Activated naive CD4-positive, alpha-beta T cell treated with anti-CD3 and anti-CD28 coated beads for 36 hours (primary cell): ENCODE measurements at regions of chr20 and their contacts with region 1.

Region 1: DNA sequence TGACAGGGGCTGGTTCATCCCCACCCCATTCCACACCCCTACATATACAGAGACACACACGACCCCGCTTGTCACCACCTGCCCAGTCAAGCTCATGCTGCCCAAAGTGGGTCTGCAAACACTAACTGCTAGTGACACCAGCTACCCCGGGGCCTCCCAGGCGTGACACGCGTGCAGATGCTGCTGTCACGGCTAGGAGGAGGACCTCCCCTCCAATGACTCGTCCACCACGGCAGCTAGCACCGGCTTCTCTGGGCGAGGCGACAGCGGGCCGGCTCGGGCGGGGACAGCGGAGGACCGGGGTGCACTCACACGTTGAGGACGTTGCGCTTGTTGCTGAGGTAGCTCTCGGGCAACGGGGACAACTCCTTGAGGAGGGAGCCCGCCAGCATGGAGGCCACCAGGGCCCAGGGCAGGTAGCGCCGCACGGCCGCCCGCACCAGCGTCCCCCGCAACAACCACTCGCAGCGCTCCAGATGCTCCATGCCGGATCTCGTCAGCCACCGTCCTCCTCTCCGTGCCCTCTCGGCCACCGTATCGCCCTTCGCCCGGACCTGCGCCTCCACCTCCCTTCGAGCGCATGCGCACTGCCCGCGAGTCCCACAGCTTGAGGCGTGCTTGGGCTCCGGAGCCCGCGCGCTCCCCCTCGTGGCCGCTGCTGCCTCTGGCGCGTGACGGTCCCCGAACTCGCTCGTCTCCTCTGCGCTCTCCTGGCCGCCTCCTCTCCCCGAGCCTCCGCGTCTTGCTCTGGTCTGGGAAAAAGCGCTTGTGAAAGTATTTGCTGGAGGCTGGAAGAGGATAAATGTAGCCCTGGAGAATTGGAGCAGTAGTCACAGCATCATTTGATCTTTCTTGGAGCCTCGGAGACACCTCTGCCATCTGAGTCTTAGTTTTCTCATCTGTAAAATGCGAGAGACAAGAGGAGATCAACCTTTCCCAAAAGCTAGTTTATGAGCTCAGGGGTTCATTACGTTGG is at the start of gene FITM2:
- DNase-seq: peak; percentile 97
- H3K4me3 Mint-ChIP-seq: peak within 1 kb of the TSS; percentile 90
- H3K27ac Mint-ChIP-seq: peak within 1 kb of the TSS; percentile 76
- H3K4me1 Mint-ChIP-seq: peaks cover 18% of the 10 kb centered on the region
- H3K27me3 Mint-ChIP-seq: no peaks in the 10 kb centered on the region
- total RNA-seq, gene FITM2: 1.7 to 2.1 TPM

Region 2: GRCh38 chr20:44187051-44187762 is 123.7 kb before region 1 on chr20 and contains the start of gene JPH2:
- CTCF ChIA-PET with region 1: interaction called, 12 read pairs
- intact Hi-C with region 1: no loop called
- DNase-seq: no peak
- H3K4me3 Mint-ChIP-seq: peak within 1 kb of the TSS; percentile 7
- H3K27ac Mint-ChIP-seq: no peak within 1 kb of the TSS
- H3K4me1 Mint-ChIP-seq: peaks cover 8% of the 10 kb centered on the region
- H3K27me3 Mint-ChIP-seq: peaks cover 41% of the 10 kb centered on the region
- total RNA-seq, gene JPH2: not detected

Region 3: GRCh38 chr20:44326391-44327159 is 15.6 kb after region 1 on chr20:
- CTCF ChIA-PET with region 1: interaction called, 20 read pairs
- intact Hi-C with region 1: no loop called
- DNase-seq: peak; percentile 23
- H3K4me3 Mint-ChIP-seq: peak overlapping the region; percentile 18
- H3K27ac Mint-ChIP-seq: no peak overlapping the region
- H3K4me1 Mint-ChIP-seq: no peaks in the 10 kb centered on the region
- H3K27me3 Mint-ChIP-seq: no peaks in the 10 kb centered on the region

Region 4: GRCh38 chr20:44460795-44461141 is 149.8 kb after region 1 on chr20:
- CTCF ChIA-PET with region 1: no interaction called
- intact Hi-C with region 1: loop called (anchors 5 kb)
- DNase-seq: no peak
- H3K4me3 Mint-ChIP-seq: no peak overlapping the region
- H3K27ac Mint-ChIP-seq: no peak overlapping the region
- H3K4me1 Mint-ChIP-seq: no peaks in the 10 kb centered on the region
- H3K27me3 Mint-ChIP-seq: no peaks in the 10 kb centered on the region

Region 5: GRCh38 chr20:44993343-44993742 is 682.4 kb after region 1 on chr20:
- CTCF ChIA-PET with region 1: no interaction called
- intact Hi-C with region 1: no loop called
- DNase-seq: no peak
- H3K4me3 Mint-ChIP-seq: no peak overlapping the region
- H3K27ac Mint-ChIP-seq: peak overlapping the region; percentile 68
- H3K4me1 Mint-ChIP-seq: peaks cover 78% of the 10 kb centered on the region
- H3K27me3 Mint-ChIP-seq: no peaks in the 10 kb centered on the region